ENCODE measurements at regions of chr17 and their contacts with region 1.

Region 1: DNA sequence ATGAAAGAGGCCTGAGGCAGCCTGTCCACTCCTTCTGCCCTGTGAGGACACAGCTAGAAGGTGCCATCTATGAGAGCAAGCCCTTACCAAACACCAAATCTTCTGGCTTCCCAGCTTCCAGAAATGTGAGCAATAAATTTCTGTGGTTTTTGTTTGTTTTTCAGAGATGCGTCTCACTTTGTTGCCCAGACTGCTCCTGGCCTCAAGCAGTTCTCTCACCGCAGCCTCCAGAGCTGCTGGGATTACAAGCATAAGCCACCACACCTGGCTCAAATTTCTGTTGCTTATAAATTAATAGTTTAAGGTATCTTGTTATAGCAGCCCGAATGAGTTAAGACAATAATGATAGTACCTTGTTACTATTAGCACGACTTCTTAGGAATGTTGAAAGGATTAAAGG is 12.5 kb upstream of the SLC16A11 start:
- DNase-seq: no peak

Region 2: DNA sequence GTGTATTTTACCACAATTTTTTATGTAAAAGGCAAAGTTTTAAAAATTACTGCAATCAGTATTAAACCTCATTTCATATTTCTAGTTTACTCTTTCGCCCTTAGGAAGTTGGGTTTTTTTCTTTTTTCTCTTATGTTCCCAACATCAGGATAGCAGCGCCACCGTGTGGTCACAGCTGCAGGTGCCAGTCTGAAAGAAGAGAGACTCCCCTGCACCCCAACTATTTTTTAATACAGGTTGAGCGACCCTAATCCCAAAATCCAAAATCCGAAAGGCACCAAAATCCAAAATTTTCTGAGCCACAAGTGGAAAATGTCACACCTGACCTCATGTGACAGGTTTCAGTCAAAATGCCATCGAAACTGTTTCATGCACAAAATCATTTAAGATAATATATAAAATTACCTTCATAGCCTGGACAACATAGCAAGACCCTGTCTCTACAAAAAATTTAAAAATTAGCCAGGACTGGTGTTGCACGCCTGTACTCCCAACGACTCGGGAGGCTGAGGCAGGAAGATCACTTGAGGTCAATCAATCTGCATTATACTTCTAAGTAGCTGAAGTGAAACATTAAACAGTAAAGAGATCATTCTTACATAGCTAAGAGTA is 80.0 kb after region 1 on chr17:
- intact Hi-C with region 1: loop called (anchors 2 kb)
- DNase-seq: peak; percentile 81

Region 3: GRCh38 chr17:7177196-7177953 is 121.0 kb after region 1 on chr17:
- intact Hi-C with region 1: loop called (anchors 2 kb)
- DNase-seq: peak; percentile 87

Measured in cardiac septum (tissue), 1 donor.